Psoas muscle (tissue), 8 donors: ENCODE measurements at regions of chr19 and their contacts with region 1.

Region 1: GRCh38 chr19:34345947-34346351 is 19.0 kb upstream of the GPI start:
- DNase-seq: peak; percentile 63 to 79
- ATAC-seq: peak; percentile 73 to 89 (median 84)
- H3K4me3 ChIP-seq: no peak overlapping the region
- H3K27ac ChIP-seq: no peak overlapping the region
- H3K4me1 ChIP-seq: no peaks in the 10 kb centered on the region
- H3K27me3 ChIP-seq: no peaks in the 10 kb centered on the region
- CTCF ChIP-seq: peak; percentile 70

Region 2: GRCh38 chr19:34220472-34221063 is 125.4 kb before region 1 on chr19:
- intact Hi-C with region 1: loop called in 1 of 2 experiments (anchors 2 kb)
- DNase-seq: peak in 1 of 2 donors; percentile 32
- ATAC-seq: peak in 2 of 4 donors; percentile 42 to 54
- H3K4me3 ChIP-seq: no peak overlapping the region
- H3K27ac ChIP-seq: no peak overlapping the region
- H3K4me1 ChIP-seq: peaks cover 18% of the 10 kb centered on the region
- H3K27me3 ChIP-seq: no peaks in the 10 kb centered on the region
- CTCF ChIP-seq: peak; percentile 68

Region 3: GRCh38 chr19:34393629-34394028 is 47.7 kb after region 1 on chr19:
- intact Hi-C with region 1: no loop called
- DNase-seq: peak; percentile 41 to 80
- ATAC-seq: peak; percentile 73 to 84 (median 76)
- H3K4me3 ChIP-seq: no peak overlapping the region
- H3K27ac ChIP-seq: peak overlapping the region; percentile 58
- H3K4me1 ChIP-seq: peaks cover 12% of the 10 kb centered on the region
- H3K27me3 ChIP-seq: no peaks in the 10 kb centered on the region
- CTCF ChIP-seq: no peak